Esophagus squamous epithelium (tissue), 5 donors: ENCODE measurements at regions of chr6 and their contacts with region 1.

Region 1: DNA sequence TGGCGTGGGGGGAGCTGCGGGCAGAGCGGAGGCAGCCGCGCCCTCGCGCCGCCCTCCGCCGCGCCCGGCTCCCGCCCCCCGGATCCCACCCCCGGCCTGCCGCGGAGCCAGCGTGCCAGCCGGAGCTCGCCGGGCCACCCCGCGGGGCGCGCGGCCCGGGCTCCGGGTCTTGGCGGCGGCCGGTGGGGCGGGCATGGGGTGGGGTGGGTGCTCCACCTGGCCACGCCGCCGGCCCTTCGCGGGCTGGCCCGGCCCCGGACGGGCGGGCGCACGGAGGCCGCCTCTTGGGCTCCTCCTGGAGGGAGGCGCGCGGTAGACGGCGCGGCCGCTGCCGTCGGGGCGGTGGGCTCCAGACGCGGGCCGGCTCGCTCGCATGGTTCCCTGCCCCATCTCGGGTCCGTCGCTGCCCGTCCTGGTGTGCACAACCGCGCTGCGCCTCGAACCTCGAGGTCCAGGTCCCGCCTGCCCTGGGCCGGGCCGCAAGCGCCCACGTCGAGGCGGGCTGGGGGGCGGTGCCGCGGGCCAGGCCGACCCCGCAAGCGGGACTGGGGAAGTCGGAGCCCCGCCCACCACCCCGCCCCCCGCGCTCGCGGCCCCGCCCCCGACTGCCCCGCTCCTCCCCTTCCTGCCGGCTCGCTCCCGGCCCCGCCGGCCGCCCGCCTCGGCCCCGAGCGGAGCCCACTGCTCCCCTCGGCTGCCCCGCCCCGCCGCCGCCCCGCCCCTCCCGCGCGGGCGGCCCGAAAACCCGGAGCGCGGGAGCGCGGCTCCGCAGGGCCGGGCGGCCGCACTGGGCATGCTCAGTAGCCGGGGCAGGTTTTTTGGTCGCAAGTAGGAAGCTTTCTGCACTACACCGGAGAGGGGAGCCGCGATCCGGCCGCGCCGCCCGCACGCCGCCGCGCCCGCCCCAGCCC is at the start of gene CDYL:
- DNase-seq: peak; percentile 22
- H3K4me3 ChIP-seq: peak within 1 kb of the TSS; percentile 67 to 90 (median 79)
- H3K27ac ChIP-seq: peak within 1 kb of the TSS; percentile 83 to 97 (median 93)
- H3K4me1 ChIP-seq: peaks cover 0 to 34% (median 5%) of the 10 kb centered on the region in 3 donors
- H3K27me3 ChIP-seq: no peaks in the 10 kb centered on the region
- CTCF ChIP-seq: peak in 4 of 6 experiments; percentile 20 to 64 (median 28)
- POLR2A ChIP-seq: peak in 3 of 4 donors; percentile 14 to 60 (median 31)
- total RNA-seq, gene CDYL: 15.2 to 43.5 (median 19.6) TPM

Region 2: DNA sequence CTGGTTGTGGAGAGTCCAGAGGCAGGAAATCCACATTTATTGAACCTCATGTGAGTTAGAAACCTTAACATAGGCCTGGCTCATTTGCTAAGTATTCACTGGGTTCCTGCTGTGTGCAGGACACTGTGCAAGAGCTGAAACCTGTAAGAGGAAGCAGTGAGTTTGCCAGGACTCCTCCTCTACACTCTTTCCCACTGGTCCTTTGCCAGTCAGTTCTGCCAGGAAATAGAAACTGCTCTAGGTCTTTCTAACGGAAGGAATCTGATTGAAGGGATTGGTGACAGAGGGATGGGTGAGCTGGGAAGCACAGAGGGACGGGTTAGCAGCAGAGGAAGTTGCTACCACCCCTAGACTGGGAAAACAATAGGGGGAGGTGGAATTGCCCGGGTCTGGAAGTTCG is 406.2 kb before region 1 on chr6:
- intact Hi-C with region 1: loop called (anchors 10 kb)
- DNase-seq: no peak
- H3K4me3 ChIP-seq: no peak overlapping the region
- H3K27ac ChIP-seq: no peak overlapping the region
- H3K4me1 ChIP-seq: peaks cover 0 to 9% (median 0%) of the 10 kb centered on the region in 3 donors
- H3K27me3 ChIP-seq: no peaks in the 10 kb centered on the region
- CTCF ChIP-seq: no peak
- POLR2A ChIP-seq: no peak

Region 3: GRCh38 chr6:4426890-4427486 is 348.9 kb before region 1 on chr6:
- intact Hi-C with region 1: no loop called
- DNase-seq: no peak
- H3K4me3 ChIP-seq: no peak overlapping the region
- H3K27ac ChIP-seq: no peak overlapping the region
- H3K4me1 ChIP-seq: no peaks in the 10 kb centered on the region
- H3K27me3 ChIP-seq: no peaks in the 10 kb centered on the region
- CTCF ChIP-seq: no peak
- POLR2A ChIP-seq: no peak

Region 4: GRCh38 chr6:5025911-5026819 is 250.3 kb after region 1 on chr6:
- intact Hi-C with region 1: loop called (anchors 10 kb)
- DNase-seq: no peak
- H3K4me3 ChIP-seq: peak overlapping the region; percentile 31 to 63 (median 54)
- H3K27ac ChIP-seq: peak overlapping the region; percentile 50 to 79 (median 72)
- H3K4me1 ChIP-seq: peaks cover 3 to 25% (median 3%) of the 10 kb centered on the region in 3 donors
- H3K27me3 ChIP-seq: no peaks in the 10 kb centered on the region
- CTCF ChIP-seq: peak in 2 of 6 experiments; percentile 8 to 19
- POLR2A ChIP-seq: no peak